Posterior cingulate gyrus (tissue), 11 donors: ENCODE measurements at regions of chr5 and their contacts with region 1.

Region 1: GRCh38 chr5:178163772-178164735 is 10.4 kb upstream of the NHP2 start:
- DNase-seq: peak; percentile 71 to 97 (median 90)

Region 2: DNA sequence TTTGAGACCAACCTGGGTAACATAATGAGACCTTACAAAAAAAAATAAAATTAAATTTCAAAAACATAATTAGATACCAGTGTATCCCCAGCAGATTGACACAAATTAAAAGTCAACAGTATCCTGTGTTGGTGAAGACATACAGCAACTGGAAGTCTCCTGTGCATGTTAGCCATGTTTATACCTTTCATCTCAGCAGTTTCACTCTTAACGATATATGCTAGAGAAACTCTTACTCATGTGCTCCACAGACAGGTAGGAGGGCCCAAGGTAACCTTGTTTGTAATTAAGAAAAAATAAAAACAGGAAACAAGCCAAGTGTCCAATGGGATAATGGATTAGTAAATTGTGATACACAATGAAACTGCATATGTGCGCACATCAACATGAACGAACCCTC is 100.8 kb before region 1 on chr5:
- intact Hi-C with region 1: loop called (anchors 5 kb)
- DNase-seq: no peak

Region 3: GRCh38 chr5:178075840-178076548 is 88.1 kb before region 1 on chr5:
- intact Hi-C with region 1: loop called (anchors 1 kb)
- DNase-seq: peak; percentile 25 to 95 (median 70)

Region 4: GRCh38 chr5:178288381-178289368 is 124.6 kb after region 1 on chr5:
- intact Hi-C with region 1: no loop called
- DNase-seq: peak in 3 of 10 donors; percentile 14 to 74 (median 67)

Region 5: DNA sequence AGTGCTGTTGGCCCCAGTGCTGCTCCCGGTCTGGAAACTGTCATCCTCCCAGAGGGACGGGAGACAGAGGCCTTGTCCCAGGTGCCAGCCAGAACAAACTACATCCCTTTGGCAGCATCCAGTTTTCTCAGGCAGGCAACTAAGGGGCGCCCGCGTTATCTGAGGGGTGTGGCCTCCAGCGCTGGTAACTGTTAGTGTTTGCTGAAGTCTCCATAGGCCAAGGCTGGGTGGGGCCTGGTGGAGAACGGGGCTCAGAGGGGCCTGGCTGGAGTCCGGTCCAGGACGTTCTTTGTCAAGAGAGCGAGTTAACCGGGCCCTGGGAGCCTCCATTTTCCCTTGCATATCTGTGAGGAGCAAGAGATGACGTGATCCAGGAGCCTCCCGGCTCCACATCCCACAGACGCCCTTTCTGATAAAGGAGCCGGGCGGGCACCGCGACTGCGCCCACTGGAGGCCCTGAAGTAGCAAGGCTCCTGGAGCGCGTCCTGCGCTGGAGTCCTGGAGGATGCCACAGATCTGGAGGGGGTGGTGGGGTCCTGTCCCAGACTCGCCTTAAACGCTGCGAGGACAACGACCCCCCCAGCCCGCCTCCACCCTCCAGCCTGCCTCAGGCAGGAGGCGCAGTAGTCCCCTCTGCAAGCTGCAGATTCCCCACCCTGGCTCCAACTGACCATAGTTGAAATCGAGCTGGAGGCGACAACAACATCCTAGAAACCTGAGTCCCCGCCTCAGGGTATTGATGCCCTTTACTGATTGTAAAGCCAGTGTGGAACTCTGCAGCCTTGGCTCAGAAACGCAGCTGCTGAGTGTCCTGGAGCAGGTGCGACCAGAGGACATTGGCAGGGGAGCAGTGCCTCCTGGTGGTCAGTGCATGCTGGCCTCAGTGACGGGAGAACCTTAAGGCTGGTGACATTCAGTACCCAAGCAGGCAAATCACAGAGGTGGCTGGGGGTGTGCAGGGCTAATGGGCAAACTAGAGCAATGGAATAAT is 674.9 kb after region 1 on chr5:
- intact Hi-C with region 1: no loop called
- DNase-seq: peak; percentile 17 to 95 (median 69)